MCF 10A (cell line): ENCODE measurements at regions of chr11 and their contacts with region 1.

Region 1: DNA sequence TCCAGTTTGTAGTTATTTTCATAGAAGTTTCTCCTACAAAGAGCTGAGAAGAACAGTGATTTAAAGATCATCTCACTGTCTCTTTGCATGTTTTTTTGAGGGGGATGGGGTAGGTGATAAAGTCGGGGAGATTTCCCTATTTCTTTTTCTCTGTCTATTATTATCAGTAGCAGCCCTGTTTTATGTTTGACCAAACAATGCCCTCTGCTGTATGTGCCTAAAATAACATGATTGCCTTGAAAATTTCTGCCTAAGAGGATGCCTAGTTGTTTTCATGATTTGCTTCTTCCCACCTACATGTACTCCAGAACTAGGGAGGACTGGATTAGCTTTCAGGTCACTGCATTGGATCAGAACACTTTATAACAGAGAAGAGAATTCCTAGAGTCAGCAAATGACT is 1330.2 kb downstream of the LRRC4C start:
- DNase-seq: peak; percentile 34
- H3K4me3 Mint-ChIP-seq: no peak overlapping the region
- H3K27ac Mint-ChIP-seq: no peak overlapping the region
- H3K4me1 Mint-ChIP-seq: peaks cover 9% of the 10 kb centered on the region
- H3K27me3 Mint-ChIP-seq: no peaks in the 10 kb centered on the region
- CTCF ChIP-seq: peak; percentile 57

Region 2: DNA sequence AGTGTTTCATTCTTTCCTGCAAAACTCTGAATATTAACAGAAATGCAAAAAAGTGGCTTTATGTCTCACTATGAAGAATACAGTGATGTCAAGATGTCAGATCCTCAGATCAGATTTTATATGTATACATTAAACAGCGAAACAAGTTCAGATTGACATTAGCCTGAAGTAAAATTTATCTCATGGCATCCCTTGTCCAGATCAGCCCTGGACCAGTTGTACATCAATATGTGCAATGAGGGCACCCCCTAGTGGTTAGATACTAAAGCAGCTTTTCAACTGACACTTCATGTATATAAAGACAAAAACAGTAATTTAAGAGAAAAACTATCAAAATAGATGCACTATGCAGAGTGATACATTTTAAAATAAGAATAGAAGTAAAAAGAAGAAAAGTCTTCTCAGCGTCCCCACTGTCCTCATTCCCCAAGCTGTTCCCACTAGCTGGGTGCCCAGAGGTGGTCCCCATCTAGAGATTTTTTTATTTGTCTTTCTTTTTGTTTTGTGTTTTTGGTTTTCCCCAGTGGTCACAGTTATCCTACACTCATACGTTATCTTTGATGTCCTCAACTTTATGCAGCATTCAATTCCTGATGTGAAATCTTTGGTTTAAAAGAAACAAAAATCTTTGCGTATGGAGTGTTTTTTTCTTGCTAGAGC is 1337.8 kb before region 1 on chr11:
- CTCF ChIA-PET with region 1: no interaction called
- POLR2A ChIA-PET with region 1: interaction called, 4 read pairs
- intact Hi-C with region 1: loop called (anchors 10 kb)
- DNase-seq: peak; percentile 82
- H3K4me3 Mint-ChIP-seq: no peak overlapping the region
- H3K27ac Mint-ChIP-seq: no peak overlapping the region
- H3K4me1 Mint-ChIP-seq: no peaks in the 10 kb centered on the region
- H3K27me3 Mint-ChIP-seq: no peaks in the 10 kb centered on the region
- CTCF ChIP-seq: peak; percentile 76

Region 3: GRCh38 chr11:39374963-39375698 is 754.1 kb before region 1 on chr11:
- CTCF ChIA-PET with region 1: interaction called, 3 read pairs
- POLR2A ChIA-PET with region 1: interaction called, 3 read pairs
- intact Hi-C with region 1: loop called (anchors 1 kb)
- DNase-seq: peak; percentile 48
- H3K4me3 Mint-ChIP-seq: no peak overlapping the region
- H3K27ac Mint-ChIP-seq: no peak overlapping the region
- H3K4me1 Mint-ChIP-seq: no peaks in the 10 kb centered on the region
- H3K27me3 Mint-ChIP-seq: no peaks in the 10 kb centered on the region
- CTCF ChIP-seq: peak; percentile 37

Region 4: GRCh38 chr11:40293655-40294348 is 164.5 kb after region 1 on chr11:
- CTCF ChIA-PET with region 1: interaction called, 6 read pairs
- POLR2A ChIA-PET with region 1: no interaction called
- intact Hi-C with region 1: loop called (anchors 1 kb)
- DNase-seq: peak; percentile 80
- H3K4me3 Mint-ChIP-seq: peak overlapping the region; percentile 78
- H3K27ac Mint-ChIP-seq: peak overlapping the region; percentile 0
- H3K4me1 Mint-ChIP-seq: peaks cover 9% of the 10 kb centered on the region
- H3K27me3 Mint-ChIP-seq: no peaks in the 10 kb centered on the region
- CTCF ChIP-seq: peak; percentile 83